Activated CD8-positive, alpha-beta memory T cell treated with anti-CD3 and anti-CD28 coated beads, Interleukin-2, amount 10 ng/mL, durations not matched to agents 7 days and 5 days (primary cell): ENCODE measurements at regions of chrX and their contacts with region 1.

Region 1: DNA sequence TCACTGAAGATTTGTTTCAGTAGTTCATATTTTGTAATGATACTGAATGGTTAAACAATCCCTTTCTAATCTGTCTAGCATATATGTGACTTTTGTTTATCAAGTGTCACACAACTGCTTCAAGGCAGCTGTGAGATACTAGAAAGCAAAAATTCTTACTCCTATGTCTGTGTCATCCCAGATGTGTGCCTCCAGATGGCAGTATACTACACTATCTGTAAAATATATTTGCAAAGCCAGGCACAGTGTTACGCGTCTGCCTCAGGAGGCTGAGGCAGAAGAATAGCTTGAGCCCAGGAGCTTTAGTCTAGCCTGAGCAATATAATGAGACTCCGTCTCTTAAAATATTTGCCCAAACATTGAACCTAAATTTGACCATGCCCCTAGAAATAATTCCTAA is 4.0 kb downstream of the NUDT10 start:
- DNase-seq: peak; percentile 40
- ATAC-seq: peak; percentile 50
- H3K4me3 Mint-ChIP-seq: no peak overlapping the region
- H3K27ac Mint-ChIP-seq: no peak overlapping the region
- H3K4me1 Mint-ChIP-seq: peaks cover 2% of the 10 kb centered on the region
- H3K27me3 Mint-ChIP-seq: peaks cover 8% of the 10 kb centered on the region

Region 2: GRCh38 chrX:50963842-50964241 is 372.7 kb before region 1 on chrX:
- CTCF ChIA-PET with region 1: no interaction called
- DNase-seq: no peak
- ATAC-seq: no peak
- H3K4me3 Mint-ChIP-seq: no peak overlapping the region
- H3K27ac Mint-ChIP-seq: no peak overlapping the region
- H3K4me1 Mint-ChIP-seq: no peaks in the 10 kb centered on the region
- H3K27me3 Mint-ChIP-seq: no peaks in the 10 kb centered on the region

Region 3: GRCh38 chrX:51316271-51316670 is 20.3 kb before region 1 on chrX:
- CTCF ChIA-PET with region 1: no interaction called
- DNase-seq: no peak
- ATAC-seq: no peak
- H3K4me3 Mint-ChIP-seq: no peak overlapping the region
- H3K27ac Mint-ChIP-seq: no peak overlapping the region
- H3K4me1 Mint-ChIP-seq: no peaks in the 10 kb centered on the region
- H3K27me3 Mint-ChIP-seq: no peaks in the 10 kb centered on the region

Region 4: GRCh38 chrX:51361251-51361650 is 24.7 kb after region 1 on chrX:
- CTCF ChIA-PET with region 1: no interaction called
- DNase-seq: no peak
- ATAC-seq: no peak
- H3K4me3 Mint-ChIP-seq: no peak overlapping the region
- H3K27ac Mint-ChIP-seq: no peak overlapping the region
- H3K4me1 Mint-ChIP-seq: no peaks in the 10 kb centered on the region
- H3K27me3 Mint-ChIP-seq: no peaks in the 10 kb centered on the region

Region 5: GRCh38 chrX:51376672-51377071 is 40.1 kb after region 1 on chrX:
- CTCF ChIA-PET with region 1: no interaction called
- DNase-seq: no peak
- ATAC-seq: no peak
- H3K4me3 Mint-ChIP-seq: no peak overlapping the region
- H3K27ac Mint-ChIP-seq: no peak overlapping the region
- H3K4me1 Mint-ChIP-seq: no peaks in the 10 kb centered on the region
- H3K27me3 Mint-ChIP-seq: peaks cover 3% of the 10 kb centered on the region

Region 6: DNA sequence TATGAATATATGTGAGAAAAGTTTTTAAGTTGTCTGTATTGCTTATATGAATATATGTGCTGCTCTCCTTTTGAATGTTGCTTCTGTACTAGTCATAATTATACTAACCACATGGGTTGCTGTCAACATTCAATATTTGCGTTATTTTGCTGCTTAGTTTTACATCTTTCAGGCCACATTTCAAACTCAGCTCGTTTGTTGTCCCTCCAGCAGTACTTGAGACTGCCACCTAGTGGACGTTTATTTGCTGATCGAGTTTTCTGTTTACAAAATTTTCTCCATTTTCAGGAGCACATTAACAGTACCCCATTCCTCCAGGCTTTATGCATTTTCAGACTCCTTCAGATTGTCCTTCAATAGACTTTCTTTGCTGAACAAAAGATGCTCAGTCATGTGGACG is 84.0 kb after region 1 on chrX:
- CTCF ChIA-PET with region 1: interaction called, 26 read pairs
- DNase-seq: no peak
- ATAC-seq: no peak
- H3K4me3 Mint-ChIP-seq: no peak overlapping the region
- H3K27ac Mint-ChIP-seq: no peak overlapping the region
- H3K4me1 Mint-ChIP-seq: no peaks in the 10 kb centered on the region
- H3K27me3 Mint-ChIP-seq: peaks cover 2% of the 10 kb centered on the region